Keratinocyte (primary cell): ENCODE measurements at regions of chr1 and their contacts with region 1.

Region 1: DNA sequence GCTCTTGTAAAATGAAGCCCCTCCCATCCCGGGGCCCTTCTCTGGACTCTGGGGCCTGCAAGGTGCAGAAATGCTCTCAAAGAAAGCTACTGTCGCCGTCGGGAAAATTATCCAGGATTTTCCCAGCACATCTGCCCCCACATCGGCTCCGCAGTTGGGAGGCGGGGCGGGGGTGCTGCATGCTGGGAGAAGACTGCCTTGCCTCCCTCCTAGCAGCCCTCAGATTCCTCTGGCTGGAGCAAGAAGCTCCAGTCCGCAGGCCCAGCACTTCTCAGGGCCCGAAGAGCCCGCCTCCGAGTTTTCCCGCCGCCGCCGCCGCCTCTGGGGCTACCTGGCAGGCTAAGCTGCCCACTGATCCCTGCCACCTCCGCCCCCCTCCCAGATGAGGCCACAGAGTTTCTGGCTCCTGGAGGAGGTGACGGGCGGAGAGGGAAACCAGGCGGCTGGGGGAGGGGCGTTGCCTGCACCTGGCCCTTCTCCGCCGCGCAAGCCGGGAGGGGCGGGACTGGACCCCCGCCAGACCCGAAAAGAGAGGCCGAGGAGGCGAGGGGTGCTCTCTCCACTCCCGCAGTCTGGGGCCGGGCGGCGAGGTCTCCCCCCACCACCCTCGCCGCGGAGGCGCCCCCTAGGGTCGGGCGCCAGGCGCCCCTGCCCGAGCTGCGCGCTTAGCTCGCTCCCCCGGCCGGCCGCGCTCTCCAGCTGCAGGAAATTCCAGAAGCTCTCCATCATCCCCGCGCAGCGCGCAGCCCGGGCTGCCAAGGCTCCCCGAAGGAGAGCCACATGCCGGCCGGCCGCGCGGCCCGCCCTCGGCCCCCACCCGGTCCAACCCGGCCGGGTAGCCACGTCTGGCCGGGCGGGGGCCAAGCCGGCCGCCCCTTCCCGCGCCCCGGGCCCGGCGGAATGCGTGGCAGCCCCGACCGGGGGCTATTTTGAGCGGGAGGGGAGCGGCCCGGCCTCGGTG is 28.8 kb downstream of the AHDC1 start:
- DNase-seq: no peak
- H3K4me3 ChIP-seq: peak overlapping the region in 2 of 3 experiments; percentile 28 to 41
- H3K27ac ChIP-seq: peak overlapping the region; percentile 30
- H3K4me1 ChIP-seq: peaks cover 55% of the 10 kb centered on the region
- H3K27me3 ChIP-seq: no peaks in the 10 kb centered on the region
- CTCF ChIP-seq: no peak

Region 2: DNA sequence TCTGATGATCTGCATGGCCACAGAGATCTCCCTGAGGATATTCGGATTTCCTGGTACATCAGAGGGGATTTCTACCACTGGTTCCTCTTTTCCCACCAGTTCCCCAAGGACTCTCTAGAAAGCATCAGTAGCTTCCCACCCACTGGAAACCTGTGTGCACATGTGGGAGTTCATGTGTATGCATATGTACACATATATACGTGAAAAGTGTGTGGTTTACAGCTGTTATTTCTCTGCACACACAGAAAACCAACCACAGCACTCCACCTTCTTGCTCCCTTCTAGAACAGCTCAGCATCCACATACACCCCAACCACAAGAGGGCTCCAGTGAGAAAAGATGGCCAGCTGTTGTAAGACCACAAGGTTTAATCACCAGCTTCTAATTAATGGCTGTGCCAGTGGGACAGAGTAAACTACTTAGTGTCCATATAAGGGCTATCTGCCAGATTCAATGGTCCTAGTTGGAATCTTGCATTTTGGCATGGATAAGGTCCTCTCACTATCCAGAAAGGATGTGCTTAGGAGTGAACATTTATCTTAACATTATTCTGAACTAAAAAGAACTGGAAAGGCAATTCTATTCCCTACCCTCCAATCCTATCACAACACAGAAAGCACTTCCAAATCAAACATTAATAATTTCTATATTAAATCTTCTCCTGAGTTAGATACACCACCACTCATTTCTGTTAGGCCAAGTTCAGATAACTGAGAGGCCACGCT is 158.6 kb before region 1 on chr1:
- dilution Hi-C with region 1: loop called (anchors 25 kb)
- DNase-seq: peak; percentile 61
- H3K4me3 ChIP-seq: no peak overlapping the region
- H3K27ac ChIP-seq: no peak overlapping the region
- H3K4me1 ChIP-seq: peaks cover 19% of the 10 kb centered on the region
- H3K27me3 ChIP-seq: no peaks in the 10 kb centered on the region
- CTCF ChIP-seq: peak; percentile 72 to 76 (median 74)

Region 3: GRCh38 chr1:27630859-27631491 is 55.8 kb after region 1 on chr1:
- dilution Hi-C with region 1: no loop called
- DNase-seq: no peak
- H3K4me3 ChIP-seq: no peak overlapping the region
- H3K27ac ChIP-seq: no peak overlapping the region
- H3K4me1 ChIP-seq: peaks cover 8% of the 10 kb centered on the region
- H3K27me3 ChIP-seq: peaks cover 16% of the 10 kb centered on the region
- CTCF ChIP-seq: no peak